Activated CD4-positive, alpha-beta memory T cell treated with anti-CD3 and anti-CD28 coated beads for 36 hours (primary cell): ENCODE measurements at regions of chr22 and their contacts with region 1.

Region 1: GRCh38 chr22:44625981-44626687 is 75.9 kb upstream of the PRR5 start:
- DNase-seq: peak; percentile 85
- H3K4me3 Mint-ChIP-seq: no peak overlapping the region
- H3K27ac Mint-ChIP-seq: no peak overlapping the region
- H3K4me1 Mint-ChIP-seq: peaks cover 2% of the 10 kb centered on the region
- H3K27me3 Mint-ChIP-seq: peaks cover 4% of the 10 kb centered on the region

Region 2: GRCh38 chr22:44080936-44081861 is 544.9 kb before region 1 on chr22:
- CTCF ChIA-PET with region 1: interaction called, 16 read pairs
- POLR2A ChIA-PET with region 1: no interaction called
- intact Hi-C with region 1: loop called (anchors 1 kb)
- DNase-seq: peak; percentile 77
- H3K4me3 Mint-ChIP-seq: no peak overlapping the region
- H3K27ac Mint-ChIP-seq: no peak overlapping the region
- H3K4me1 Mint-ChIP-seq: no peaks in the 10 kb centered on the region
- H3K27me3 Mint-ChIP-seq: no peaks in the 10 kb centered on the region

Region 3: DNA sequence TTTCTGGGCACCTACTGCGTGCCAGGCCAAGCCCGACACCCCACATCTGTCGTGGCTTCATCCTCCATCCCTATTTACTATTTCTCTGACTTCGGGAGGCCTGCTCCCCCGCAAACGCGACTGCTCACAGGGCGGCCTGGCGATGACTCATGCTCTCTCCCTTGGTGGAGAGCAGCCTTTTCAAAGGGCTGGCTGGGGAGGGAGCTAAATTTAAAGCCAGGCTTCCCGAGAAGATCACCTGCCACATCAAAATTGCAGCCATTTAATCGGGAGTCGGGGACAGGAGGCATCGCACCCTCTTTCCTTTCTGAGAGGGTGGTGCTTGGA is 288.5 kb before region 1 on chr22:
- CTCF ChIA-PET with region 1: no interaction called
- POLR2A ChIA-PET with region 1: no interaction called
- intact Hi-C with region 1: loop called (anchors 10 kb)
- DNase-seq: peak; percentile 33
- H3K4me3 Mint-ChIP-seq: no peak overlapping the region
- H3K27ac Mint-ChIP-seq: no peak overlapping the region
- H3K4me1 Mint-ChIP-seq: no peaks in the 10 kb centered on the region
- H3K27me3 Mint-ChIP-seq: peaks cover 4% of the 10 kb centered on the region